Mammary epithelial cell (primary cell): ENCODE measurements at regions of chr17 and their contacts with region 1.

Region 1: GRCh38 chr17:43118679-43119615 is 6.2 kb downstream of the BRCA1 start:
- DNase-seq: no peak
- H3K4me3 ChIP-seq: no peak overlapping the region
- H3K27ac ChIP-seq: no peak overlapping the region
- H3K4me1 ChIP-seq: no peaks in the 10 kb centered on the region
- H3K27me3 ChIP-seq: no peaks in the 10 kb centered on the region
- CTCF ChIP-seq: no peak

Region 2: DNA sequence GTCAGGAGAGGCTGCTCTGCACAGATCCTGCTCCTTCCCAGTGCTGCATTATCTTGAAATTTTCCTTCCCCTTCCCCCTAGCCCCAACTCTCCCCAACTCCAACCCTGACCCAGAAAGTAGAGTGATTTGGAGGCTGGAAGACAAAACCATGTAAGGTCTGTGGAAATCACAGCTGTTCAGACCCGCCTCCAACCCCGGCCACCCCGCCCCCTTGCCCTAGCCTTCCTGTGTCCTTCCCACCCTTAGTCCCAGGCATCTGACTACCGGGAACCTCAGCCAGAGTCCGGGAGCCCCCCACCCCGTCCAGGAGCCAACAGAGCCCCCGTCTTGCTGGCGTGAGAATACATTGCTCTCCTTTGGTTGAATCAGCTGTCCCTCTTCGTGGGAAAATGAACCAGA is 268.0 kb before region 1 on chr17 and contains the start of gene AOC3:
- CTCF ChIA-PET with region 1: no interaction called
- dilution Hi-C with region 1: loop called (anchors 5 kb)
- in situ Hi-C with region 1: no loop called
- intact Hi-C with region 1: no loop called
- DNase-seq: no peak
- H3K4me3 ChIP-seq: no peak within 1 kb of the TSS
- H3K27ac ChIP-seq: no peak within 1 kb of the TSS
- H3K4me1 ChIP-seq: peaks cover 5% of the 10 kb centered on the region
- H3K27me3 ChIP-seq: no peaks in the 10 kb centered on the region
- CTCF ChIP-seq: no peak
- total RNA-seq, gene AOC3: 0.31 TPM in 1 of 2 donors, not detected in the other

Region 3: GRCh38 chr17:42944211-42944610 is 174.7 kb before region 1 on chr17:
- CTCF ChIA-PET with region 1: no interaction called
- dilution Hi-C with region 1: loop called (anchors 5 kb)
- in situ Hi-C with region 1: no loop called
- intact Hi-C with region 1: no loop called
- DNase-seq: no peak
- H3K4me3 ChIP-seq: no peak overlapping the region
- H3K27ac ChIP-seq: no peak overlapping the region
- H3K4me1 ChIP-seq: no peaks in the 10 kb centered on the region
- H3K27me3 ChIP-seq: no peaks in the 10 kb centered on the region
- CTCF ChIP-seq: no peak

Region 4: GRCh38 chr17:43033948-43034881 is 84.7 kb before region 1 on chr17:
- CTCF ChIA-PET with region 1: no interaction called
- dilution Hi-C with region 1: loop called (anchors 5 kb)
- in situ Hi-C with region 1: no loop called
- intact Hi-C with region 1: no loop called
- DNase-seq: no peak
- H3K4me3 ChIP-seq: no peak overlapping the region
- H3K27ac ChIP-seq: no peak overlapping the region
- H3K4me1 ChIP-seq: no peaks in the 10 kb centered on the region
- H3K27me3 ChIP-seq: no peaks in the 10 kb centered on the region
- CTCF ChIP-seq: no peak

Region 5: DNA sequence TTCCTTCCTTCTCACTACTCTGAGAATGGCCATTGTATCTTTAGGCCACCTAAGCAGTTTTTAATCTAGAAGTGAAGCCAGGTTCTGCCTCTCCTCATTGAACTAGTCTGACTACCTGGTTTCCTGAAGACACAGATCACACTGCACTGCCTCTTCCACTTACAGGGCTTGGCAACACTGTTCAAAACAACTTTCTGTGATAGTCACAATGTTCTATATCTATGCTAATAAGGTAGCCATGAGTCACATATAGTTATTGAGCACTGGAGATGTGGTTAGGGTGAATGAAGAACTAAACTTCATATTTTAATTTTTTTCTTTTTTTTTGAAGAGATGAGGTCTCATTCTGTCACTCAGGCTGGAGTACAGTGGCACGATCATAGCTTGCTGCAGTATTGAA is 67.0 kb before region 1 on chr17:
- CTCF ChIA-PET with region 1: no interaction called
- dilution Hi-C with region 1: loop called (anchors 10 kb)
- in situ Hi-C with region 1: no loop called
- intact Hi-C with region 1: no loop called
- DNase-seq: no peak
- H3K4me3 ChIP-seq: no peak overlapping the region
- H3K27ac ChIP-seq: no peak overlapping the region
- H3K4me1 ChIP-seq: no peaks in the 10 kb centered on the region
- H3K27me3 ChIP-seq: no peaks in the 10 kb centered on the region
- CTCF ChIP-seq: no peak

Region 6: DNA sequence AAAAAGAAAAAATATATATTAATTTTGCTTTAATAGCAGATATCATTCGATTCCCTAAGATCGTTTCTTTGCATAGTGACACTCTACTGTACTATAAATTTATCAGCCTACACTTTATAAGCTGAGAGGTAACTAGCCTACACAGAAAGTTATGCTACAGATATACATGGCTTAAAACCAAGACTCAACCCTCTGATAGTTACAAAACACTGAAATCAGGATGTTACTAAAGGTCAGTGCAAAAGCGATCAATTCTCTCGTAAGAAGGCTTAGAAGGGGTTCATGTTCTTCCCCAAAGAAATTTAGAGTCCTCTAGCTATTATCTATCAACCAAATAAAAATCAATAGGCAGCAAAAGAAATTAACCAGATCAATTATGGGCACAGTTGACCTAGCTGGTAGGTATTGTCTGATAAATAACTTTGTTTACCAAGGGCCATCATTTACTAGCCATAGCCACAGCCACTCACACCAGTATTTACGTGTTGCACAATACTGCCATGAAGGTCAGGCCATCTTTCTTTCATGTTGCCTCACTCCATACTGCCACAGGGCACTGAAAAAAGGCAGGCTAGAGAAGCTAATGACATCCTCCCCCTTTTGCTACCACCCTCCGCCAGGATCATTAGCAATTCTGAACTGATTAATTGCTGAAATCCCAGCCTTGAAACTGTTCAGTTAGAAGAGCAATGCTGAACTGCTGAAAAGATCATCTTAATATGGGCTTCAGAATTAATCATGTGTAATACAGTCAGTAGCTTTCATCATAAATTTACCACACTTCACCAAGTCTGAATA is 50.2 kb before region 1 on chr17:
- CTCF ChIA-PET with region 1: no interaction called
- dilution Hi-C with region 1: no loop called
- in situ Hi-C with region 1: no loop called
- intact Hi-C with region 1: no loop called
- DNase-seq: no peak
- H3K4me3 ChIP-seq: no peak overlapping the region
- H3K27ac ChIP-seq: no peak overlapping the region
- H3K4me1 ChIP-seq: no peaks in the 10 kb centered on the region
- H3K27me3 ChIP-seq: no peaks in the 10 kb centered on the region
- CTCF ChIP-seq: no peak

Region 7: GRCh38 chr17:43193251-43193650 is 74.3 kb after region 1 on chr17:
- CTCF ChIA-PET with region 1: no interaction called
- dilution Hi-C with region 1: loop called (anchors 5 kb)
- in situ Hi-C with region 1: no loop called
- intact Hi-C with region 1: no loop called
- DNase-seq: no peak
- H3K4me3 ChIP-seq: no peak overlapping the region
- H3K27ac ChIP-seq: no peak overlapping the region
- H3K4me1 ChIP-seq: no peaks in the 10 kb centered on the region
- H3K27me3 ChIP-seq: no peaks in the 10 kb centered on the region
- CTCF ChIP-seq: no peak